Left ventricle myocardium inferior (tissue), 1 donor: ENCODE measurements at regions of chr1 and their contacts with region 1.

Region 1: DNA sequence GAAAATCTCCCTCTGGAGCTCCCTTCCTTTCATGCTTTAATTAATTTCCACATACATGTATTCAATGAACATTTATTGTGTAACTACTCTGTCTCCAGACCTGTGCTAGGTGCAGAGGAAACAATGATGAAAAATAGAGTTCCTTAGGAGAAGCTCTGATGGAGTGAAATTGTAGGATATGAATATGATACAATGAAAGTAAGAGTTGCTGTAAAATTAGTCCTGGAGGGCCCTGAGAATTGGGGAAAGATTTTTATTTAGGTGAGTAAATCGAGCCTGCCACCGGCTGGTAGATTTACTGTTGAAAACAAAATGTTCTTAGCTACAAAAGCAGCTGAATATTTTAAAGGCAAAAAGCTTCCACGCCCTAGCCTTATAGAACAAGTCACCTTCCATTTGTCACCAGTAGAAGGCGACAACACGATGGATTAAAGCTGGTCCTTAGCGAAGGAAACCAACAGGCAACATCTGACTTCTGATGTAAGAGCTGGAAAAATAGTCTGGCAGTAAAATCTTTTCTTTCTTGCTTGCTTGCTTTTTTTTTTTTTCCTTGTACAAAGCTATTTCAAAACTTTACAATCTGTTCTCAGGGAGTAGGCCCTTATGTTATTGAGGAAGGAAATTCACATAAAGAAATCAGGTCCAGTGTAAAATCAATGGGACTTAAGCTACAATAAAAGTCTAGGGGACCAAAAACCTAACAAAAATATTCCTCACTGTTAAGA is 82.0 kb upstream of the ROR1 start:
- DNase-seq: no peak
- H3K4me3 ChIP-seq: no peak overlapping the region
- H3K27ac ChIP-seq: peak overlapping the region; percentile 49
- H3K4me1 ChIP-seq: peaks cover 24% of the 10 kb centered on the region
- H3K27me3 ChIP-seq: no peaks in the 10 kb centered on the region
- CTCF ChIP-seq: peak; percentile 77

Region 2: DNA sequence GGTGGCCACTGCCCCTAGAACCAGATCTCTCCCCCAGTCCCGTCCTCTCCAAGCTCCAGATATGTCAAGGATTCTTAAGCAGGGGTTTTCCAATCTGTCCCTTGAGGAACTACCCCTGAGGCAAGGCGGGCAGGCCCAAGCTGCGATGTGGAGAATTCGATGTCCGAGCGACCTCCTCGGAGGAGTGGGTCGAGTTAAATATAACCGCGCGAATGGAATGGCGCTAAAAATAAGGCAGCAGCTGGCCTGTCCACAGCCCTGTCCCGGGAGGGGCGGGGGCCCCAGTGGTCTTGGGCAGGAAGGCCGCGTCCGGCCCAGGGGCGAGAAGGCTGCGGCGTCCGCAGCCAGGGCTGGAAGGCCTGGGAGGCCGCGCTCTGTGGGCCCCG is 375.3 kb before region 1 on chr1:
- intact Hi-C with region 1: no loop called
- DNase-seq: no peak
- H3K4me3 ChIP-seq: peak overlapping the region; percentile 60
- H3K27ac ChIP-seq: no peak overlapping the region
- H3K4me1 ChIP-seq: peaks cover 26% of the 10 kb centered on the region
- H3K27me3 ChIP-seq: peaks cover 100% of the 10 kb centered on the region
- CTCF ChIP-seq: no peak

Region 3: DNA sequence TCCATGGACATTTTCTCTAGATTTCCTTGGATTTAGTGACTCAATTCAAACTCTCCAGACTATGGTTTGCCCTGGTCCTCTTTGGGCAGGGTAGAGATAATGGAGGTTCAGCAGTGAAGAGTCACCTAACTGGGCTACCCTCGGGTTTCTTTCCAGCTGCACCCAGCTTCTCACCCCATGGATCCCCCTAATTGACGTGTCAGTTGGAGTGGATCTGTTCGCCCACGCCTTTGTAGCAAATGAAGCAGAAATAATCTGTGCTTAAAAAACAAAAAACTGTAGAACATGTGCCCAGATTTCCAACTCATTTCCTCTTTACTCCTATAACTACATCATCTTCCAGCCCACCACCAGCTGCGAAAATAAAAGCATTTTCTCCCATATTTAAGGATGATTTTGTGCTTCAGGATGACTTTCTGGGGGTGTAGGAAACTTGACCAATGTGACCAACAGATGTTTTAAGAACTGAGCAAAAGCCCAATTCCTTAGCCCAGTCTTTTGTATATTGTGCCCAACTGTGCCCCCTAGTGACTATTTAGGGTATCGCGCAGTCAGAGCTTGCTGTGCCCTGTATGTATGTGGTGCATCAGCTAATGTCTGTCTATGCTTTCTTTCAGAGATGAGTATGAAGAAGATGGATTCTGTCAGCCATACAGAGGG is 445.0 kb after region 1 on chr1:
- intact Hi-C with region 1: loop called (anchors 10 kb)
- DNase-seq: peak; percentile 64
- H3K4me3 ChIP-seq: no peak overlapping the region
- H3K27ac ChIP-seq: no peak overlapping the region
- H3K4me1 ChIP-seq: no peaks in the 10 kb centered on the region
- H3K27me3 ChIP-seq: no peaks in the 10 kb centered on the region
- CTCF ChIP-seq: peak; percentile 92